ENCODE measurements at regions of chr3 and their contacts with region 1.

Region 1: DNA sequence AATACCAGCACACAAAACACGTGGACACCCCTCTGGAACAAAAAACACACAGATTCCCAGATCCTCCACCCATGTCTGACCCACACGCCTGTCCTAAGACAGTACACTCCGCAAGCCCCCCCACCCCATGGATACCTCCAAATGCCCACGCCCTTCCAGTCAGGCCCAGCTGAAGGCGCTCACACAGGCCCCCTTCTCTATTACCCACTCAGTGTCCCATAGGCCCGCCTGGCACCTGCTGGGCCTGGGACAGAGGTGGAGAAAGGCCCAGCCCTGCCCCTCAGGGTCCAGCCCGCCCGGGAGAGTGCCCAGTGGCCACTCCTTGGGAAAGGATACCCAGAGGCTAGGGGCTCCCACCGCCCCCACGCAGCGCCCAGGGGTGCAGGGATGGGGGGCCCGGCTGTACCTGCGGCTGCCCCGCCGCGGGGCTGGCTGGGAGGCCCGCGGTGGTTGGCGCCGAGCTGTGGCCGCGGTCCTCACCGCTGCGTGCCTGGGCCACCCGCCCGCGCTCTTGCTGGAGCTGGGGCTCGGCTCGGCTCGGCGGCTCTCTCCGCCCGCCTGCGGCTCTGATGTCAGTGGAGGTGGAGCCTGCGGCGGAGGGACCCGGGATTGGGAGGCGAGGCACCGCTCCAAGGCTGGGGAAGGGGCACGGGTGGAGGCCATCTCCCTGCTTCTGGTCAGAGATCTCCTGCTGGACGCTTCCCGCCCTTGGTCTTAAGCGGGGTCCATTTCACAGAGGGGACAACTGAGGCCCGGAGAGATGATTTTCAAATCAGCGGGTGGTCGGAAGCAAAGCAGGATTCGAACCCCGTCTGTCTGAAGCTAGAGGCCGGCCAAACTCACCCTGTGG is at the start of gene CAMK1:
- DNase-seq: peak in 8 of 9 donors; percentile 31 to 82 (median 49)
- ATAC-seq: peak; percentile 90
- H3K4me3 ChIP-seq: peak within 1 kb of the TSS; percentile 49
- H3K4me3 Mint-ChIP-seq: peak within 1 kb of the TSS; percentile 34 to 87 (median 68)
- H3K27ac ChIP-seq: peak within 1 kb of the TSS; percentile 43
- H3K27ac Mint-ChIP-seq: peak within 1 kb of the TSS; percentile 24 to 87 (median 57)
- H3K4me1 ChIP-seq: peaks cover 8 to 13% of the 10 kb centered on the region in 2 donors
- H3K4me1 Mint-ChIP-seq: peaks cover 13 to 45% (median 24%) of the 10 kb centered on the region in 7 donors
- H3K27me3 ChIP-seq: no peaks in the 10 kb centered on the region
- H3K27me3 Mint-ChIP-seq: peaks cover 0 to 3% (median 0%) of the 10 kb centered on the region in 5 donors
- total RNA-seq, gene CAMK1: 2.1 to 36.3 (median 2.5) TPM

Region 2: DNA sequence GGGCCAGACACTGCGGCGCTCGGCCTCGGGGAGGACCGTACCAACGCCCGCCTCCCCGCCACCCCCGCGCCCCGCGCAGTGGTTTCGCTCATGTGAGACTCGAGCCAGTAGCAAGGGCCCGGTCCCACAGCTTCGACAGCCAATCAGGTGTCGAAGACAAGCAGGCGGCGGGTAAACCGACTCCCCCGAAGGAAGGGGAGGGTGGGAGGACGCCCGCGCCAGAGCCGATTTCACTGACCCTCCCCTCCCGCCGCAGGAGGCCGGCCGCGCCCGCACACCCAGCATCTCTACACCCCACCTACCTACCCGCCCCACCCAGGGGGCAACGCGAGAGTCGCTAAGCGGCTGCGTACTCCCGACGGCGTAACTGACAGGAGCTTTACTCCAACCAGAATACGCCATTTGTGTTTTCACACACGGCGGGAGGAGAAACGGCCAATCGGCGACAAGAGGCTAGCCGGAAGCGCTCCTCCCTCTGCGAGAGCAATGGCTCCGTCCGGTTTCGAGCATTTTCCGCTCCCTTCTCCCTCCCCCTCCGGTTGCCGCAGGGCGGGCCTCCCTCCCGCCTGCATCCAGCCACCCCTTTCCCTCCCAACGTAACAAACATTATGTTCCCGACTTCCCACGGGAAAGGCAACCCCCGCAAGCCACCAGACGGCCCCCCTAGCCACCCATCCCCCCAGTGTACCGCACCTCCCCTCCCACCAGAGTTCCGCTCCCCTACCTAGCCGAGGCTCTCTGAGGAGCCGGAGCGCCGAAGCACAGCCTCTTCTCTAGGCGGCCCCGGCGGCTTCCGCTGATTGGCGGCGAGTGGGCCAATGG is 372.7 kb before region 1 on chr3:
- CTCF ChIA-PET with region 1: no interaction called
- POLR2A ChIA-PET with region 1: no interaction called
- intact Hi-C with region 1: no loop called
- DNase-seq: peak; percentile 98 to 100 (median 99)
- ATAC-seq: peak; percentile 82
- H3K4me3 ChIP-seq: peak overlapping the region; percentile 85
- H3K4me3 Mint-ChIP-seq: peak overlapping the region; percentile 89 to 100 (median 96)
- H3K27ac ChIP-seq: peak overlapping the region; percentile 82
- H3K27ac Mint-ChIP-seq: peak overlapping the region; percentile 90 to 100 (median 98)
- H3K4me1 ChIP-seq: peaks cover 46 to 55% of the 10 kb centered on the region in 2 donors
- H3K4me1 Mint-ChIP-seq: peaks cover 59 to 80% (median 75%) of the 10 kb centered on the region in 7 donors
- H3K27me3 ChIP-seq: no peaks in the 10 kb centered on the region
- H3K27me3 Mint-ChIP-seq: peaks cover 0 to 2% (median 0%) of the 10 kb centered on the region in 5 donors

Region 3: GRCh38 chr3:9779721-9780457 is 10.2 kb after region 1 on chr3:
- CTCF ChIA-PET with region 1: interaction called, 3 read pairs
- POLR2A ChIA-PET with region 1: interaction called, 3 read pairs
- intact Hi-C with region 1: loop called in 1 of 2 experiments (anchors 1 kb)
- DNase-seq: peak in 7 of 9 donors; percentile 21 to 48 (median 38)
- ATAC-seq: peak; percentile 80
- H3K4me3 ChIP-seq: peak overlapping the region; percentile 23
- H3K4me3 Mint-ChIP-seq: peak overlapping the region; percentile 41 to 82 (median 72)
- H3K27ac ChIP-seq: peak overlapping the region; percentile 5
- H3K27ac Mint-ChIP-seq: peak overlapping the region; percentile 1 to 90 (median 72)
- H3K4me1 ChIP-seq: peaks cover 33 to 39% of the 10 kb centered on the region in 2 donors
- H3K4me1 Mint-ChIP-seq: peaks cover 43 to 63% (median 57%) of the 10 kb centered on the region in 7 donors
- H3K27me3 ChIP-seq: no peaks in the 10 kb centered on the region
- H3K27me3 Mint-ChIP-seq: no peaks in the 10 kb centered on the region

Measured in naive thymus-derived CD4-positive, alpha-beta T cell (primary cell).